ENCODE measurements at regions of chr4 and their contacts with region 1.

Region 1: DNA sequence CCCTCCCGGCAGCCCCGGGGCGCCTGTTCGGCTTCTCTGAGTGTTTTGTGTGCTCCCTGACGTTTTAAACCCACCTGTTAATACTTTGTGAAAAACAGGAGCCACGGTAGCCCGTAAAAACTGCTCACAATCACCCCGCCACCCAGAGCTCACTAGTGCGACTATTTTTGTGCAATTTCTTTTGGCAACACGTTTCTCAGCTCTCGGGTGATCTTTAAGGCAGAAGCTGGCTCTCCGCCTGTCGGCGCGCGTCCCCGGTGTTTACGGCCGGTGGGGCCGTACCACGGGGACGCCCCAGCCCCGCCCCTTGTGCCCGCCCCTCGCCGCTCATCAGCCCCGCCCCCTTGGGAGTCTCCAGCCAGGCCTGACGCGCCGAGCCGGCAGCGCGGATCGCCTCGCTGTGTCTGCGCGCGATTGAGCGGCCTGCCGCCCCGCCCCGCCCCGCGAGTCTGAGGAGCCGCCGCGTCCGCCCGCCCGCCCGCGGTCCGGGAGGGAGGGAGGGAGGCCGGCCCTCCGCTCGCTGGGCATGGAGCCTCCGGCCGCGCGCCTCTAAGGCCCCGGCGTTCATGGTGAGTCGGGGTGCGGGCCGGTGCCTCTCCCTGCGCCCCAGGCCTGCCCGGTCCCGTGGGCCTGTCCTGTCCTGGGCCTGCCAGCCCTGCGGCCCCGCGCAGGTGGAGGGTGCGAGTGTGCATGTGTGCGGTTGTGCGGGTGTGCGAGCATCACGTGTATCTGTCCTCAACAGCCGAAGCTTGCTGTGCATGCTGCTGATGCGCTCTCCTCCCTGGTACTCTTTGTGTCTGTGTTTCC is 56.2 kb upstream of the TADA2B start:
- DNase-seq: peak; percentile 60
- ATAC-seq: peak; percentile 90
- H3K4me3 ChIP-seq: peak overlapping the region; percentile 85
- H3K27ac ChIP-seq: peak overlapping the region; percentile 83
- H3K4me1 ChIP-seq: peaks cover 19% of the 10 kb centered on the region
- H3K27me3 ChIP-seq: no peaks in the 10 kb centered on the region
- CTCF ChIP-seq: peak in 1 of 3 experiments; percentile 5; a peak in 2 of 6 replicates
- EP300 ChIP-seq: no peak
- POLR2A ChIP-seq: peak; percentile 84
- RAD21 ChIP-seq: peak; percentile 13; the same call in 1 of the 2 replicates

Region 2: GRCh38 chr4:6783053-6783981 is 203.7 kb before region 1 on chr4:
- CTCF ChIA-PET with region 1: no interaction called
- POLR2A ChIA-PET with region 1: no interaction called
- RAD21 ChIA-PET with region 1: interaction called, 4 read pairs
- SMC1A ChIA-PET with region 1: interaction called, 4 read pairs
- in situ Hi-C with region 1: no loop called
- intact Hi-C with region 1: loop called (anchors 10 kb)
- DNase-seq: peak; percentile 27
- ATAC-seq: peak; percentile 87
- H3K4me3 ChIP-seq: peak overlapping the region; percentile 89
- H3K27ac ChIP-seq: peak overlapping the region; percentile 88
- H3K4me1 ChIP-seq: 0 out of 2 replicates have a peak, but pooled peaks cover 6% of the 10 kb centered on the region
- H3K27me3 ChIP-seq: no peaks in the 10 kb centered on the region
- CTCF ChIP-seq: peak; percentile 19 to 42 (median 25); a peak in 3 of 6 replicates
- EP300 ChIP-seq: no peak
- POLR2A ChIP-seq: peak; percentile 78; the same call in 1 of the 2 replicates
- RAD21 ChIP-seq: peak; percentile 15; the same call in 1 of the 2 replicates

Region 3: DNA sequence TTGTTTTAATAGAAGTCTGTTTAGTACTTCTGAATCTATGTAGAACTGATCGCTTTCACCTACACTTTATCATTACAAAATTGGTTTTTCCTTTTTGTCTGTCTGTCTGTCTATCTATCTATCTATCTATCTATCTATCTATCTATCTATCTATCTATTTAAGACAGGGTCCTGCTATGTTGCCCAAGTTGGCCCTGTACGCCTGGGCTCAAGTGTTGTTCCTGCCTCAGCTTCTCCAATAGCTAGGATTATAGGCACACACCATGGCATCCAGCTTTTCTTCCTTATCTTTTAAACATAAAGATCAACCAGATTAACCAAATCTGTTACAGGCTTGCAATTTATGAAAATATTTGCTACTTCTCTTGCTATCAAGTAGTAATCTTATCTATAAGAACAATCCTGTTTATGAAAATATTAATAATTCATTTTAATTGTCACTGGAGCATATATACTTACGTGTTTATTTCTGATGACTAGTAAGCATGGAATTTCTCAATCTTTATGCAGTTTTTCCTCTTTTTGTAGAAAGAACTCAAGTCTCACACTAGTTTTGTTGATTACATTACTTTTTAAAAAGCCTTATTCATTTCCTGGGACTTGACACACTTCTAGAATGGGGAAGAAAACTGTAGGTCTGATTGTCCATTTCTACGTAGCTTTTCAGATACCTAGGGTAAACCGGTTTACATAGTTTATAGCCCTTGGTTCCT is 179.9 kb before region 1 on chr4:
- CTCF ChIA-PET with region 1: no interaction called
- POLR2A ChIA-PET with region 1: no interaction called
- RAD21 ChIA-PET with region 1: no interaction called
- SMC1A ChIA-PET with region 1: no interaction called
- in situ Hi-C with region 1: no loop called
- intact Hi-C with region 1: no loop called
- DNase-seq: no peak
- ATAC-seq: no peak
- H3K4me3 ChIP-seq: no peak overlapping the region
- H3K27ac ChIP-seq: no peak overlapping the region
- H3K4me1 ChIP-seq: no peaks in the 10 kb centered on the region
- H3K27me3 ChIP-seq: no peaks in the 10 kb centered on the region
- CTCF ChIP-seq: no peak
- EP300 ChIP-seq: no peak
- POLR2A ChIP-seq: no peak
- RAD21 ChIP-seq: no peak

Region 4: GRCh38 chr4:6909073-6909965 is 77.7 kb before region 1 on chr4 and contains the start of gene TBC1D14:
- CTCF ChIA-PET with region 1: interaction called, 11 read pairs
- POLR2A ChIA-PET with region 1: interaction called, 5 read pairs
- RAD21 ChIA-PET with region 1: interaction called, 13 read pairs
- SMC1A ChIA-PET with region 1: interaction called, 14 read pairs
- in situ Hi-C with region 1: no loop called
- intact Hi-C with region 1: loop called (anchors 5 kb)
- DNase-seq: no peak
- ATAC-seq: peak; percentile 94
- H3K4me3 ChIP-seq: peak within 1 kb of the TSS; percentile 97
- H3K27ac ChIP-seq: peak within 1 kb of the TSS; percentile 96
- H3K4me1 ChIP-seq: peaks cover 17% of the 10 kb centered on the region
- H3K27me3 ChIP-seq: 0 out of 4 replicates have a peak, but pooled peaks cover 0 to 3% of the 10 kb centered on the region in 2 experiments
- CTCF ChIP-seq: no peak; a peak in 2 of 6 replicates
- EP300 ChIP-seq: no peak
- POLR2A ChIP-seq: peak; percentile 82
- RAD21 ChIP-seq: no peak
- polyA plus RNA-seq, gene TBC1D14: 0.87 to 1.1 TPM

Region 5: DNA sequence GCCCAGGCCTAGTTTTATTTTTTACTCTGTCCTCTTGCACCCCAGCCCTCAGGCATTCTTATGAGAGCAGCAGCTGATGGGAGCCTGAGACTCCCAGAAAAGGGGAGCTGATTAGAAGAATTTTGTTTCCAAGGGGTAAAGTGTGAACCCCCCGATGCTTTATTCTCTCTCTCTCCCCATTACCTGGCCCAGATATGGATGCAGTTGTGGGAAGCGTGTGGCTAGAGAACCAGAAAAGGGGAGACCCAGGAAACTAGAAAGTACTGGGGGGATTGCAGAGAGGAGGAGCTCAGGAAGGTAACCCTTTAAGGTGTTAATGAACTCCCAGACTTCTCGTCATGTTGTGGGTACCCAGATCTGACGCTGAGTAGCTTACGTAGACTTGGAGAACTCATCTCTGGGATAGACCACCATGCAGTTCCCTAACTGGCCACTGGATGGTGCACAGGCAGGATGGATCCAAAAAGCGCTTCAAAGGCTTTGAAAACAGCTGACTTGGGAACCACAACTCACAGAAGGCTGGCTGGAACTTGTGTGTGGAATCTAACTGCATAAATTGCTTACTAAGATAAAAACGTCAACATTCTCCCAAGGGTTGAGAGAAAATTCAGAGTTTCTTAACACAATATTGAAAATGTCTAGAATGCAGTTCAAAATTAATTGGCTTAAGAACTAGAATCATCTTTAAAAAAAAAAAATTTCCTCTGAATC is 12.7 kb before region 1 on chr4:
- CTCF ChIA-PET with region 1: interaction called, 35 read pairs
- POLR2A ChIA-PET with region 1: interaction called, 4 read pairs
- RAD21 ChIA-PET with region 1: interaction called, 4 read pairs
- SMC1A ChIA-PET with region 1: interaction called, 12 read pairs
- in situ Hi-C with region 1: no loop called
- intact Hi-C with region 1: no loop called
- DNase-seq: peak; percentile 40
- ATAC-seq: peak; percentile 86
- H3K4me3 ChIP-seq: no peak overlapping the region
- H3K27ac ChIP-seq: no peak overlapping the region
- H3K4me1 ChIP-seq: peaks cover 18% of the 10 kb centered on the region
- H3K27me3 ChIP-seq: no peaks in the 10 kb centered on the region
- CTCF ChIP-seq: peak; percentile 90 to 99 (median 99)
- EP300 ChIP-seq: no peak
- POLR2A ChIP-seq: no peak
- RAD21 ChIP-seq: peak; percentile 82

Region 6: DNA sequence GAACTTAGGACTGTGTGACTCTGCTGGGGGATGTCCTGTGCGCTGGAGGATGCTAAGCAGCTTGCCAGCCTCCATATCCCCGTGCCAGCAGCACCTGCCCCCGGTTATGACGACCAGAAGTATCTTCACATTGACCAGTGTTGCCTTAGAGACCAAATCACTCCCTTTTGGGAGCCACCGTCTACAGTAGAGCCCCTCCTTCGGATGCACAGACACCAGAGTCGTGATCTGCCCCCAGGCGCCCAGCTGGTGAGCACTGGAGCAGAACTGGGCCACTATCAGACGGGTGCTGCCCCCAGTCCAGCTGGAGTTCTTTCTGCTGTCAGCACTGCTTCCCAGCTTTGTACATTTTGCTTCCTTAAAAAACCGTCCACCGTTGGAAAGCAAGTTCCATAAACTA is 26.2 kb after region 1 on chr4:
- CTCF ChIA-PET with region 1: interaction called, 3 read pairs
- POLR2A ChIA-PET with region 1: interaction called, 5 read pairs
- RAD21 ChIA-PET with region 1: interaction called, 11 read pairs
- SMC1A ChIA-PET with region 1: interaction called, 5 read pairs
- in situ Hi-C with region 1: no loop called
- intact Hi-C with region 1: no loop called
- DNase-seq: no peak
- ATAC-seq: peak; percentile 58
- H3K4me3 ChIP-seq: no peak overlapping the region
- H3K27ac ChIP-seq: peak overlapping the region; percentile 85
- H3K4me1 ChIP-seq: peaks cover 17% of the 10 kb centered on the region
- H3K27me3 ChIP-seq: no peaks in the 10 kb centered on the region
- CTCF ChIP-seq: no peak
- EP300 ChIP-seq: no peak
- POLR2A ChIP-seq: no peak
- RAD21 ChIP-seq: no peak

Region 7: DNA sequence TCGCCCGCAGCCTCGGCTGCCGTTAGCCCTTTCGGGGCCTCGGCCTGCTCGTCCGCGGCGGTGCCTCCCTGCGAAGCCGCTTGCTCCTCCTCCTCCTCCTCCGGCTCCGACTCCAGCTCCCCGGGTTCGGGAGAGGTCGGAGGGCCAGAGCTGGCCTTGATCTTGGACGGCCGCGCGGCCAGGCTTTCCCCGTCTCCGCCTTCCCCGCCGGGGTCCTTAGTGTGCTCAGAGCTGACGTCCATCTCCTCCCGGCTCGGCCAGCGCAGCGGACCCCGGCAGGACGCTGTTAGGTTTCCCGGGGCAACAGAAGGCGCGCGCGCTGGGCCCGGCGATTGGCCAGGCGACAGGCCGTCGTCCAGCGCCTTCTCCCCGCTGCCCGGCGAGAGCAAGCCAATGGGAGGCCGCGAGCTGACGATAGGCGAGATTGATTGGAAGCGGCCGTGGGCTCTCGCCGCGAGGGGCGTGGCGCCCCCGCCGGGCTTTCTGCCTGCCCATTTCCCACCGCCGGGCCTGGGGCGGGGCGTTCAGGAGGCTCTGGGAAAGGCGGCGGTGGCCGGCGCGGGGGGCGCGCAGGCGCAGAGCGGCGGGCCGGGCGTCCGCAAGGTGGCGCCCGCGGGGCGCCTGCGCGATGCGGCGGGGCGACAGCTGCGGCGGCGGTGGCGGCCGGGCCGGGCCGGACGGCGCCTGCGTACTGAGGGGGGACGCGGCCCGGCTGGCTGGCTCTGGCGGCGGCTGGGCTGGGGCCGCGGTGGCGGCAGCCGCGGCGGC is 55.9 kb after region 1 on chr4 and contains the start of gene TADA2B:
- CTCF ChIA-PET with region 1: interaction called, 24 read pairs
- POLR2A ChIA-PET with region 1: interaction called, 13 read pairs
- RAD21 ChIA-PET with region 1: interaction called, 4 read pairs
- SMC1A ChIA-PET with region 1: interaction called, 7 read pairs
- in situ Hi-C with region 1: no loop called
- intact Hi-C with region 1: loop called (anchors 2 kb)
- DNase-seq: peak; percentile 63
- ATAC-seq: peak; percentile 86
- H3K4me3 ChIP-seq: peak within 1 kb of the TSS; percentile 83
- H3K27ac ChIP-seq: peak within 1 kb of the TSS; percentile 87
- H3K4me1 ChIP-seq: peaks cover 27% of the 10 kb centered on the region
- H3K27me3 ChIP-seq: peaks cover 0 to 2% of the 10 kb centered on the region in 2 experiments; a peak in 1 of 4 replicates
- CTCF ChIP-seq: peak; percentile 18 to 61 (median 30); a peak in 4 of 6 replicates
- EP300 ChIP-seq: no peak
- POLR2A ChIP-seq: no peak
- RAD21 ChIP-seq: no peak
- polyA plus RNA-seq, gene TADA2B: 0.66 to 1.2 TPM